ENCODE measurements at regions of chr4 and their contacts with region 1.

Region 1: DNA sequence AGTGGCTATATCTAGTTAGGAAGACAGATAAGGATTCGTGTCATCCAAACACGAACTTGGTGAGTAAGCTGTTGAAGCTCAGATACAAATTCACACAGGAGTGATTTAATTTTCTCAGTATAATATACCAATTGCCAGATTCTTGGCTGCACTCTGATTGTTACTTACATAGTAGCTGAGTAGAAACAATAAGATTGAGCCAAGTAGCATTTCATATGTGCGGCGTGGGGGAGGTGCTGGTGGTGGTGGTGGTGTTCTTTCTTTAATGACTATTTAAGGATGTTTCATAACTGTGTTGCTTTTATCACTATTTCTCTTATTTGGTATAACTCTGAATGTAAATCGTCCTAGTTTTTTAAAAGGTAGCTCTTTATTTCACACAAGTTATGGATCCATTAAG is 102.9 kb downstream of the UGT8 start:
- DNase-seq: no peak

Region 2: DNA sequence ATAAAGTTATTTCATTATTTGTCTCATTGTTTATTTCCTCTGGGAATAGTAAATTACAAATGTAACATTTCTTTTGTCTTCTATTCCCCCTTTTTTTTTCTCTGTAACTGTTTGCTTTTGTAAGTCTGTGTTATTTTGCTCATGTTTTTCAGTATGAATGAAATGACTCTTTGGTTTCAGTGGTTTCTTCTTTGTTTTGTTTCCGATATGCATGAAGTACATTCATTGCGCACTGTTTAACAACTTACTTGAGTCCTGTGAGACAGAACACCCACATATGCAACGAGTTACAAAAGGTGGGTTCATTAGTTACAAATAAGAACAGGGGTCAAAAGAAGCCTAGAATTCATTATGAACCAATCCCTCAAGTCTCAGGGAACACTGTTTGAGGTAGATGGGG is 277.9 kb before region 1 on chr4:
- in situ Hi-C with region 1: loop called (anchors 25 kb)
- DNase-seq: no peak

Measured in ACHN (cell line).